Transverse colon (tissue), 4 donors: ENCODE measurements at regions of chr4 and their contacts with region 1.

Region 1: GRCh38 chr4:26404743-26405206 is 84.0 kb downstream of the RBPJ start:
- DNase-seq: no peak
- H3K4me3 ChIP-seq: no peak overlapping the region
- H3K27ac ChIP-seq: no peak overlapping the region
- H3K4me1 ChIP-seq: peaks cover 0 to 3% (median 0%) of the 10 kb centered on the region in 4 donors
- H3K27me3 ChIP-seq: no peaks in the 10 kb centered on the region
- CTCF ChIP-seq: peak in 1 of 5 experiments; percentile 5
- EP300 ChIP-seq: no peak
- POLR2A ChIP-seq: no peak

Region 2: DNA sequence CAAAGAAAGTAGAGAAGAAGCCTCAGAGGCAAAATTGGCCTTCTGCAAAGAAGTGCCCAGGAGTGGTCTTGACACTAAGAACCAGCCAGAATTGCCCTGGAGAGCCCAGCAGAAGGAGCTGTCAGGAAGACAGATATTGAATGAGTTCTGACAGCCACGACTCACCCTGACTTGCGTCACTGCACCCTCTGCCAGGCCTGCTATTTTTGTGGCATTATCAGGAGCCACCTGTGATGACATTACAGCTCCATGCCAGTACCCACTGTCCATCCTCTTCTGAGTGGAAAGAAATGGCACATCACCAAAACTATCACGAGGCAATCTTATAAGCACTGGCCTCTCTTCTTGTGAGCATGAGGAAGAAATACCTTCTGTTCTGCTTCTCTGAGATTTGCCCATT is 423.0 kb before region 1 on chr4:
- in situ Hi-C with region 1: loop called in 1 of 4 experiments (anchors 25 kb)
- intact Hi-C with region 1: loop called (anchors 10 kb)
- DNase-seq: no peak
- H3K4me3 ChIP-seq: no peak overlapping the region
- H3K27ac ChIP-seq: no peak overlapping the region
- H3K4me1 ChIP-seq: no peaks in the 10 kb centered on the region
- H3K27me3 ChIP-seq: no peaks in the 10 kb centered on the region
- CTCF ChIP-seq: no peak
- EP300 ChIP-seq: no peak
- POLR2A ChIP-seq: no peak

Region 3: DNA sequence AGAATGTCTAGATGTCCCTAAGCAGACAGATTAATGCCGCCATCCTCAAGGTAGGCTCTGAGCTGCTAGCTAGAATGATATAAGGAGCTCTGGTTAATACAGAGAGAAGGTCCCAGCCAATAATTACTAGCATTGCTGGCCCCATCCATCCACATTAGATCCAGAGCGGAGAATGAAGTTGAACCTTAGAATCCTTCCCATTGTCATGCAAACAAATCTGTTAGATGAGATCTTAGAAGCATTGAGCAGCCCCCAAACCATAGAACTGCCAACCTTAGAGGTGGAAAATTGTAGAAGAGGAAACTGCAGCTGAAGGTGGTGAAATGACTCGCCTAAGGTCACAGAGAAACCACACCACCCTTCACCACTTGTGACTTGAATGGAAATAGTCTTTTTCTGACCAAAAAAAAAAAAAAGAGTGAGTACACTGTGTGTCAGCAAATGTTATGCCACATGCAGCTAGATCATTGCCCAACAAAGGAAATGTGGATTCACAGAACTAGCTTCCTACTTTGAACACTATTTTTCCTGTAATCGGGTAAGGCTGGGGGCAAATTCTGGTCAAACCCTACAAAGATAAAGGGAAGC is 328.7 kb before region 1 on chr4:
- in situ Hi-C with region 1: loop called in 3 of 4 experiments (anchors 5 to 25 kb)
- intact Hi-C with region 1: no loop called
- DNase-seq: no peak
- H3K4me3 ChIP-seq: no peak overlapping the region
- H3K27ac ChIP-seq: peak overlapping the region; percentile 28 to 59 (median 44)
- H3K4me1 ChIP-seq: peaks cover 0 to 3% (median 0%) of the 10 kb centered on the region in 4 donors
- H3K27me3 ChIP-seq: no peaks in the 10 kb centered on the region
- CTCF ChIP-seq: no peak
- EP300 ChIP-seq: no peak
- POLR2A ChIP-seq: no peak

Region 4: GRCh38 chr4:26319467-26319948 is 85.3 kb before region 1 on chr4:
- in situ Hi-C with region 1: loop called in 1 of 4 experiments (anchors 10 kb)
- intact Hi-C with region 1: no loop called
- DNase-seq: peak; percentile 99
- H3K4me3 ChIP-seq: peak overlapping the region; percentile 70 to 77 (median 73)
- H3K27ac ChIP-seq: peak overlapping the region; percentile 90 to 97 (median 96)
- H3K4me1 ChIP-seq: peaks cover 0 to 29% (median 16%) of the 10 kb centered on the region in 4 donors
- H3K27me3 ChIP-seq: no peaks in the 10 kb centered on the region
- CTCF ChIP-seq: peak in 1 of 5 experiments; percentile 8
- EP300 ChIP-seq: no peak
- POLR2A ChIP-seq: no peak